ENCODE measurements at regions of chr22 and their contacts with region 1.

Region 1: GRCh38 chr22:30390974-30391691 is 3.9 kb upstream of the RNF215 start:
- DNase-seq: peak; percentile 71

Region 2: DNA sequence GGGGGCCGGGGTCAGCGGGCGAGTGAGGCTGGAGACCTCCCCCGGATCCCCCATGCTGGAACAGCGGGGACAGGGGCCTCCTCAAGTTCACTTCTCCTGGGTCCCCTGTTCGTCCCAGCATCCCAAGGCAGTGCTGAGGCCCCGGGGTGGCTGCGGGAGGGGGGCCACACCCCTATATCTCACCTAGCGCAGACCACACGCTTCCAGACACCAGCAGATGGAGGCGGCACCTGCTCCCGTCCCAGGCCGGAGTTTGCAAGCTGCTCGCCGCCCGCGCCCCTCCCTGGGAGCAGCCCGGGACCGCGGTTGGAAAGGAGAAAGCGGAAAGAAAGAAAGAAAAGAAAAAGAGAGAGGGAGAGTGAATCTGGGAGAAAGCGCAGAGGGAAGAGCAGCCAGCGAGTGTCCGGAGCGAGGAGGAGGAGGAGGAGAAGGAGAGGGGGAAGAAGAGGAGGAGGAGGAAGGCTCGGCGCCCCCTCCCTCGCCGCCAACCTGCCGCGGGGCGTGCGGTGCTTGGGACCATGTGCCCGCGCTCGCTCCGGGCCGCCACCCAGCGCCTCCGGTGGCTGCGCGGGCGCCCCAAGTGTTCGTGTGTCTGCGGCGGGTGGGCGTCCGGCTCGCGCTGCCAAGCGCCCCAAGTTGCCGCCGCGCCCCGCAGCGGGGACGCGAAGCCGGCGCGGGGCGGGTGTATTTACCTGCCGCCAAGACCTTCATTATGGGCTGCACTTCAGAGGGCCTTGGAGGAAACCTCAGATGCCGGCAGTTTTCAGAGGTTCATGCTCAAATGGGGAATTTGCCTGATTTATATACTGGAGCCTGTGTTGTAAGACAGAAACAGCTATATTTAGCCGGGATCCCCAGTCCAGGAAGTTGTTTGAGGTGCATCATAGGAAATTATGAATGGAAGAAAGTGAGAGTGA is 144.9 kb before region 1 on chr22 and contains the start of gene LIF:
- in situ Hi-C with region 1: no loop called
- DNase-seq: no peak
- total RNA-seq, gene LIF: 24.5 and 36.5 TPM in 2 replicates

Region 3: GRCh38 chr22:30289134-30289979 is 101.8 kb before region 1 on chr22 and contains the start of gene CASTOR1:
- in situ Hi-C with region 1: loop called (anchors 5 kb)
- DNase-seq: peak; percentile 92
- total RNA-seq, gene CASTOR1: 9.8 and 11.3 TPM in 2 replicates